Body of pancreas (tissue), 4 donors: ENCODE measurements at regions of chr14 and their contacts with region 1.

Region 1: GRCh38 chr14:59126710-59127432 is 61.6 kb upstream of the DAAM1 start:
- DNase-seq: peak; percentile 28 to 44 (median 34)
- ATAC-seq: peak; percentile 82
- H3K4me3 ChIP-seq: no peak overlapping the region
- H3K27ac ChIP-seq: no peak overlapping the region
- H3K4me1 ChIP-seq: no peaks in the 10 kb centered on the region
- H3K27me3 ChIP-seq: peaks cover 0 to 4% of the 10 kb centered on the region in 2 donors
- CTCF ChIP-seq: peak; percentile 18 to 86 (median 79)
- POLR2A ChIP-seq: no peak

Region 2: GRCh38 chr14:59438195-59438647 is 311.4 kb after region 1 on chr14:
- intact Hi-C with region 1: loop called (anchors 5 kb)
- DNase-seq: no peak
- ATAC-seq: no peak
- H3K4me3 ChIP-seq: no peak overlapping the region
- H3K27ac ChIP-seq: no peak overlapping the region
- H3K4me1 ChIP-seq: no peaks in the 10 kb centered on the region
- H3K27me3 ChIP-seq: no peaks in the 10 kb centered on the region
- CTCF ChIP-seq: no peak
- POLR2A ChIP-seq: no peak